ENCODE measurements at regions of chr3 and their contacts with region 1.

Region 1: GRCh38 chr3:66407611-66408218 is 93.1 kb downstream of the LRIG1 start:
- DNase-seq: peak; percentile 54 to 79 (median 59)
- H3K4me3 ChIP-seq: no peak overlapping the region
- H3K4me3 Mint-ChIP-seq: no peak overlapping the region
- H3K27ac ChIP-seq: no peak overlapping the region
- H3K27ac Mint-ChIP-seq: peak overlapping the region in 3 of 8 donors; percentile 7 to 45 (median 38)
- H3K4me1 ChIP-seq: no peaks in the 10 kb centered on the region
- H3K4me1 Mint-ChIP-seq: peaks cover 3% of the 10 kb centered on the region in 3 donors
- H3K27me3 ChIP-seq: no peaks in the 10 kb centered on the region
- H3K27me3 Mint-ChIP-seq: no peaks in the 10 kb centered on the region

Region 2: GRCh38 chr3:66302288-66302687 is 105.4 kb before region 1 on chr3:
- CTCF ChIA-PET with region 1: no interaction called
- POLR2A ChIA-PET with region 1: no interaction called
- DNase-seq: peak; percentile 23 to 83 (median 58)
- H3K4me3 ChIP-seq: no peak overlapping the region
- H3K4me3 Mint-ChIP-seq: peak overlapping the region; percentile 41 to 70 (median 58)
- H3K27ac ChIP-seq: peak overlapping the region; percentile 94
- H3K27ac Mint-ChIP-seq: peak overlapping the region in 2 of 8 donors; percentile 97 to 99
- H3K4me1 ChIP-seq: peaks cover 85% of the 10 kb centered on the region
- H3K4me1 Mint-ChIP-seq: peaks cover 23 to 26% (median 25%) of the 10 kb centered on the region in 3 donors
- H3K27me3 ChIP-seq: no peaks in the 10 kb centered on the region
- H3K27me3 Mint-ChIP-seq: no peaks in the 10 kb centered on the region

Region 3: DNA sequence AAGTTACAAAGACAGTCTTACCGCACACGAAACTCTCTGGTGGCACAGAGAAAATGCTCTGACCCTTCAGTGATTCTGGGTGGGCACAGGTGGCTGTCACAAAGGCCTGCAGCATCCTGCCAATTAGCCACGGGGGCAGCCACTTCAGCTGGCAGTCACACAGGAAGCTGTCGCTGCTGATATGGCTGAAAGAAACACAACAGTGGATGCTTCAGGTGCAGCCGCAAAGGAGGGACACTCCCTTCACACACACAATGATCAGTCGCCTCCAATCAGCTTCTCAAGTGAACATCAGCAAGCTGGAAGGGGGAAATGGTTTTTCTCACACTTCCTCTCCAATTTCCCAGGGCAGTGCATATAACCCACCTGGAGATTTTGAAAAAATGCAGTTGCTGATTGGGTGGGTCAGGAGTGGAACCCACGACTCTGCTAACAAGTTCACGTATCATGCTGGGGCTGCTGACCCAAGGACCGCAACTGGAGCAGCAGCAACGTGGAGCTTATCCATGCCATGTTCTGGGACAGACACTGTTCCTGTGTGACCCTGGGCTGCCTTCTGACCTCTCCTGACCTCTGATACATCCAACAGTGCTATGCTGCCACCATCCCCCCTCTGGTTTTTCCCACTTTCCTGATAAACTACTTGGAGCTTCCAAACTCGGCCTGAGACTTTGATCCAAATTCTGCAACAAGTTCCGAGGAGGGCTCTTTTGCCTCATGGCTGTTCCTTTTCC is 13.5 kb before region 1 on chr3:
- CTCF ChIA-PET with region 1: interaction called, 24 read pairs
- POLR2A ChIA-PET with region 1: no interaction called
- DNase-seq: peak; percentile 42 to 81 (median 54)
- H3K4me3 ChIP-seq: peak overlapping the region; percentile 41
- H3K4me3 Mint-ChIP-seq: peak overlapping the region; percentile 77 to 91 (median 90)
- H3K27ac ChIP-seq: peak overlapping the region; percentile 34
- H3K27ac Mint-ChIP-seq: peak overlapping the region; percentile 88 to 99 (median 96)
- H3K4me1 ChIP-seq: peaks cover 47% of the 10 kb centered on the region
- H3K4me1 Mint-ChIP-seq: peaks cover 53 to 62% (median 61%) of the 10 kb centered on the region in 3 donors
- H3K27me3 ChIP-seq: no peaks in the 10 kb centered on the region
- H3K27me3 Mint-ChIP-seq: no peaks in the 10 kb centered on the region

Region 4: DNA sequence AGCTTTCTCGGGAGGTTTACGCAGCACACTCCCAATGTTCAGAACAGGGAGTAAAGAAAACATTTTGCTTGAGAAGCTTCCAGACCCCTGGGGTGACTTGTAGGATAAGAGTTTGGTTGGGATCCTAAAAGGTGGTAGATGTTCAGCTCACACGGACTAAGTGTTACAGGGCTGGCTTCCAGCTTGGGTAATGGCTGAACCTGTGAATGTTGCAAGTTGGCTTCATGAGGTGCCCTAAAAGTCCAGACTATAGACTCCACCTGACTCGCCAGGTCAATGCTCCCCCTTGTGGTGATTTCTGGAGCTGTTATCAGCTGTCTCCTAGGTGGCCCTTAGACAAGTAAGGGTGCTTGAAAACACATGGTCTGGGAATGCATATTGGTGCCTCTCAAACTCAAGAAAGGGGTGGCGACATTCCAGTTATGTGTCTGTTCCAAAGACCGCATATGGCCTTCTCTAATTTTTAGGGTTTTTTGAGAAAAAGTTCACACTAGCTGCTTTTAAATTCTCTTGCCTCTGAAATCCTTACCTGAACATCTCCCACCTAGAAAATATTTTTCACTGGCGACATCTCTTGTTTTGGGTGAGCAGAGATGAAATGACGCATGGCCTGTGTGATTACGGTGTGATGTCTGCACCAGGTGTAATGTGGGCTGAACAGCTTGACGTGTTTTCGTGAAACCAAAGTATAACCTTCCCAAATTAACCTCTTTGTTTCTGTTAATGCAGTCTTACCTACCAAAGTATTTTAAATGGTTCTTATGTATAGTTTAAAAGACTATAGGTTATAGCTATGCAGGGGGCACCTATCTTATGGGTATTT is 414.7 kb after region 1 on chr3:
- CTCF ChIA-PET with region 1: interaction called, 65 read pairs
- POLR2A ChIA-PET with region 1: no interaction called
- DNase-seq: peak; percentile 40 to 74 (median 48)
- H3K4me3 ChIP-seq: no peak overlapping the region
- H3K4me3 Mint-ChIP-seq: no peak overlapping the region
- H3K27ac ChIP-seq: no peak overlapping the region
- H3K27ac Mint-ChIP-seq: no peak overlapping the region
- H3K4me1 ChIP-seq: no peaks in the 10 kb centered on the region
- H3K4me1 Mint-ChIP-seq: no peaks in the 10 kb centered on the region
- H3K27me3 ChIP-seq: no peaks in the 10 kb centered on the region
- H3K27me3 Mint-ChIP-seq: peaks cover 0 to 7% of the 10 kb centered on the region in 2 donors

Measured in CD8-positive, alpha-beta memory T cell (primary cell).